ENCODE measurements at regions of chr5 and their contacts with region 1.

Region 1: GRCh38 chr5:69217548-69218526 is 16.8 kb upstream of the CDK7 start:
- DNase-seq: peak; percentile 96 to 99 (median 98)
- H3K4me3 ChIP-seq: peak overlapping the region; percentile 34 to 87 (median 81)
- H3K27ac ChIP-seq: peak overlapping the region; percentile 79 to 95 (median 90)
- H3K4me1 ChIP-seq: peaks cover 4 to 18% of the 10 kb centered on the region in 2 donors
- H3K27me3 ChIP-seq: no peaks in the 10 kb centered on the region
- CTCF ChIP-seq: peak in 4 of 6 experiments; percentile 44 to 53 (median 46)
- POLR2A ChIP-seq: peak; percentile 31 to 78

Region 2: DNA sequence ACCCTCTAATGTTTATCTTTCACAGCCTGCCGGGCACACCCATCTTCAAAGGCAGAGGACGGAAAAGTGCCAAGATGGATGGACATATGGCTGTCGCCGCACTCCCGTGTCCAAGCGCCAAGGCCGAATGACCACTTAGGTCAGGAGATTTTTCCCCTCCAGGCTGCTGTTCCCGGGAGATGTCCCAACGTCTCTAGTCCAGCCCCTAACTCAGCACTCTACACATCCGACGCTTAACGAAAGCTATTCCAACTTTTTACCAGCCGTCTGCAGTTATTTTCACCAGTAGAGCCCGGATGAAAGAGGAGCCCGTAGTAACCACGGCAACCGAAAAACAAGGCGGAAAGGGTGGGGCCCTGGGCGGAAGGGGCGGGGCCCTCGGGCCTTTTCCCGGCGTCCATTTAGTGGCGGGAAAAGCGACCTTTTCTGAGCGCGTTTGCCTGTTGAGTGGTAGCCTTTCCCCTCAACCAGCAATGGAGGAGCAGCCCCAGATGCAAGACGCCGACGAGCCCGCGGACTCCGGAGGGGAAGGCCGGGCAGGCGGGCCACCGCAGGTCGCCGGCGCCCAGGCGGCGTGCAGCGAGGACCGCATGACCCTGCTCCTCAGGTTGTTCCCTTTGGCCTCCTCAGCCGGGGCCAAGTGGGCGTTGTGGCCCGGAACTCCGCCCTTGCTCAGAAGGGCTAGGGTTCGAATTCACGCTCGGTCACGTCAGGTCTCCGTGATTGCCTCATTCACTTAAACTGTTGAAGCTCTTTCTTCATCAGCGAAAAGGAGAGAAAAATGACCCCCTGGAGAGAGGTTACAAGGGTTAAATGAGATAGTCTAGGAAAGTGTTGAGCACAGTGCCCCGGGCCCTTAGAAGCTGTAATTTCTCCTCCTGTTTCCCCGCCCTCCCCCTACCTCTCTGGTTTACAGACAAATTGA is 28.4 kb before region 1 on chr5 and contains the start of gene CENPH:
- intact Hi-C with region 1: loop called in 1 of 2 experiments (anchors 2 kb)
- DNase-seq: peak; percentile 88 to 97 (median 92)
- H3K4me3 ChIP-seq: peak within 1 kb of the TSS; percentile 4 to 72 (median 53)
- H3K27ac ChIP-seq: peak within 1 kb of the TSS in 3 of 5 donors; percentile 44 to 83 (median 80)
- H3K4me1 ChIP-seq: peaks cover 6 to 13% of the 10 kb centered on the region in 2 donors
- H3K27me3 ChIP-seq: no peaks in the 10 kb centered on the region
- CTCF ChIP-seq: no peak
- POLR2A ChIP-seq: peak in 1 of 2 donors; percentile 30
- total RNA-seq, gene CENPH: 0.69 to 9.8 (median 2.2) TPM in 8 of 9 donors, not detected in the other